ENCODE measurements at regions of chr11 and their contacts with region 1.

Region 1: DNA sequence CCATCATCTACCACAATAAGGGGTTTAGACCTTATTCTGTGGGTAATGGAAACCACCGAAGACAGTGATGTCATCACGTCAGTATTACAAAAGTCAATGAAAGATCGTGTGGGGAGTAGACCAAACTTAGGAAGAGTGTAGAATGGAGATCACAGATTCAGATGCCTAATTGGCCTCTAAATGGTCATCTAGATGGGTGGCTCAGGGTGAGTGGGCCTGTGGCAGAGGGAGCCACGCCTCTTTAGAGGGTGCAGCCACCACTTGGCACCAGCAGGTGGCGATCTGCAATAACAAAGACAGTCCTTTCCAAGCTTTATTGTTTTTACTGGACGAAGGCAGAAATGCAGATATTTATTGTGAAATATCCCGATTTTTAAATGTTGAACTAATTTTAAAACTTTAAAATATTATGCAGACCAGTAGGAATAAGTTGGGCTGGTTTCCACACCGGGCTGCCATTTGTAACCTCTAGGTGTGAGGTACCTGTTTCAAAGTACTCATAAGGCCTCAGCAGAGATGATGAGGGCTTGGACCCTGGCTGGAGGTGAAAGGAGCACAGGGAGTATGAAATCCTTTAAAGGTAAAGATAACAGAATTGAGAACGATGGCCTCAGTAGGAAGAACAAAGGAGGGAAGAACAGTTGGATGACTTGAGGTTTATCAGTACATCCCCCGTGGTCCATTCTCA is 222.0 kb downstream of the DBX1 start:
- DNase-seq: peak; percentile 70
- CTCF ChIP-seq: peak; percentile 74

Region 2: GRCh38 chr11:20110908-20111669 is 172.8 kb after region 1 on chr11:
- CTCF ChIA-PET with region 1: interaction called, 11 read pairs
- POLR2A ChIA-PET with region 1: no interaction called
- DNase-seq: peak; percentile 76
- CTCF ChIP-seq: peak; percentile 86